GM12878 (cell line): ENCODE measurements at regions of chr4 and their contacts with region 1.

Region 1: GRCh38 chr4:10743357-10743756 is 58.8 kb upstream of the CLNK start:
- DNase-seq: peak; percentile 91
- ATAC-seq: peak; percentile 80
- H3K4me3 ChIP-seq: peak overlapping the region; percentile 27; the same call in 1 of the 2 replicates
- H3K27ac ChIP-seq: peak overlapping the region; percentile 78
- H3K4me1 ChIP-seq: peaks cover 45% of the 10 kb centered on the region
- H3K27me3 ChIP-seq: no peaks in the 10 kb centered on the region
- CTCF ChIP-seq: no peak
- EP300 ChIP-seq: peak; percentile 75 to 87; a peak in 3 of 4 replicates
- POLR2A ChIP-seq: no peak
- RAD21 ChIP-seq: peak; percentile 17; the same call in 1 of the 2 replicates

Region 2: DNA sequence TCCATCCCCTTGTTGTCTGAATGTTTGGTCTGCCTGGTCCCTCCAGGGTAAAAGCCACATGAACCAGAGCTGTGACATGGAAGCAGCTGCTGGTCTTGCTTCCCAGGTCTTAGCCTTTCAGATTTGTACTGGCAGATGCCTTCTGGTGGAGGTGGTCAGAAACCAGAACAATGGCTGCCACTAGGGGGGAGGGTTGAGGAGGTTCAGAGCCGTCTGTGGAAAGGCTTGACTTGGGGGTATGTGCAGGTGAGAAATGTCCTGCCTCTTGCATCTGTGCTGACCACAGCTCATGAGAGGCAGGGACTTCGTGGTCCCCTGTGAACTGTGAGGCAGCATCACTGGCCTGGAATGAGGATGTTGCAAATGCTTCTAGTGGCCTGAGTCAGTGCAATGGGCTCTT is 482.6 kb before region 1 on chr4:
- CTCF ChIA-PET with region 1: no interaction called
- POLR2A ChIA-PET with region 1: no interaction called
- RAD21 ChIA-PET with region 1: no interaction called
- SMC1A ChIA-PET with region 1: no interaction called
- in situ Hi-C with region 1: no loop called
- intact Hi-C with region 1: no loop called
- DNase-seq: no peak
- ATAC-seq: no peak
- H3K4me3 ChIP-seq: no peak overlapping the region
- H3K27ac ChIP-seq: no peak overlapping the region
- H3K4me1 ChIP-seq: no peaks in the 10 kb centered on the region
- H3K27me3 ChIP-seq: no peaks in the 10 kb centered on the region; a peak in 2 of 4 replicates
- CTCF ChIP-seq: no peak
- EP300 ChIP-seq: no peak
- POLR2A ChIP-seq: no peak
- RAD21 ChIP-seq: no peak

Region 3: DNA sequence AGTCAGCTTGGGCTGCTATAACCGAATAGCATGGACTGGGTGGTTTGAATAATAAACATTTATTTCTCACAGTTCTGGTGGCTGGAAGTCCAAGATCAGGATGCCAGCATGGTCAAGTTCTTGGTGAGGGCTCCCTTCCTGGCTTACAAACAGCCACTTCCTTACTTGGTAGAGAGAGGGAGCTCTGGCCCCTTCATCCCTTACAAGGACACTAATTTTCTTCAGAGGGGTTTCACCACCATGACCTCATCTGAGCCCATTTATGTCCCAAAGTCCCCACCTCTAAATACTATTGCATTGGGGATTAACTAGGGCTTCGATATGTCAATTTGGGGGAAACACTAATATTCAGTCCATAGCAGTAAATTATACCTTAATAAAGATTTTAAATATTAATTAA is 120.6 kb before region 1 on chr4:
- CTCF ChIA-PET with region 1: interaction called, 5 read pairs
- POLR2A ChIA-PET with region 1: no interaction called
- RAD21 ChIA-PET with region 1: no interaction called
- SMC1A ChIA-PET with region 1: interaction called, 4 read pairs
- in situ Hi-C with region 1: no loop called
- intact Hi-C with region 1: loop called (anchors 1 kb)
- DNase-seq: peak; percentile 26
- ATAC-seq: peak; percentile 93
- H3K4me3 ChIP-seq: no peak overlapping the region
- H3K27ac ChIP-seq: no peak overlapping the region
- H3K4me1 ChIP-seq: no peaks in the 10 kb centered on the region
- H3K27me3 ChIP-seq: no peaks in the 10 kb centered on the region
- CTCF ChIP-seq: peak; percentile 49 to 70 (median 69)
- EP300 ChIP-seq: no peak
- POLR2A ChIP-seq: no peak
- RAD21 ChIP-seq: peak; percentile 90

Region 4: DNA sequence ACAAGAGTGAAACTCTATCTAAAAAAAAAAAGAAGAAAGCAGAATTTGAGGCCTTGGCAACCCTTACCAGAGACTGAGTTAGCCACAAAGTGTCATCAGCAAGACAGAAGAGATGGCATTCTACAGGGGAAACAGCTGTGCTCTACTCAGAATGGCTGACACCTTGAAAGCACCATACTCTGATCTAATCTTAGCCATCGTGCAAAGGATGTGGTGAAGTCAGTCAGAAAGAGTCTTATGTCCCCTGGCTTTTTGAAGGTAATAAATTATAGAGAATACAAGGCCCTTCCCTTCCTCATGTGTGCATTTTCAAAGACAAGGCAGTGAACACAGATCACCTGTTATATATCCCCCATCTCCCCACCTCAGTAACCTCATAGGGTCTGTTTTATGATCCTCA is 72.0 kb before region 1 on chr4:
- CTCF ChIA-PET with region 1: interaction called, 4 read pairs
- POLR2A ChIA-PET with region 1: interaction called, 4 read pairs
- RAD21 ChIA-PET with region 1: interaction called, 6 read pairs
- SMC1A ChIA-PET with region 1: interaction called, 16 read pairs
- in situ Hi-C with region 1: no loop called
- intact Hi-C with region 1: no loop called
- DNase-seq: peak; percentile 92
- ATAC-seq: peak; percentile 84
- H3K4me3 ChIP-seq: no peak overlapping the region
- H3K27ac ChIP-seq: peak overlapping the region; percentile 57
- H3K4me1 ChIP-seq: peaks cover 29% of the 10 kb centered on the region
- H3K27me3 ChIP-seq: no peaks in the 10 kb centered on the region
- CTCF ChIP-seq: no peak
- EP300 ChIP-seq: no peak; a peak in 1 of 4 replicates
- POLR2A ChIP-seq: no peak
- RAD21 ChIP-seq: peak; percentile 24; the same call in 1 of the 2 replicates

Region 5: GRCh38 chr4:10684631-10685030 is 58.7 kb before region 1 on chr4 and contains the start of gene CLNK:
- CTCF ChIA-PET with region 1: no interaction called
- POLR2A ChIA-PET with region 1: interaction called, 6 read pairs
- RAD21 ChIA-PET with region 1: interaction called, 8 read pairs
- SMC1A ChIA-PET with region 1: interaction called, 15 read pairs
- in situ Hi-C with region 1: no loop called
- intact Hi-C with region 1: no loop called
- DNase-seq: peak; percentile 77
- ATAC-seq: peak; percentile 77
- H3K4me3 ChIP-seq: peak within 1 kb of the TSS; percentile 52
- H3K27ac ChIP-seq: peak within 1 kb of the TSS; percentile 80
- H3K4me1 ChIP-seq: peaks cover 27% of the 10 kb centered on the region
- H3K27me3 ChIP-seq: no peaks in the 10 kb centered on the region
- CTCF ChIP-seq: no peak
- EP300 ChIP-seq: no peak
- POLR2A ChIP-seq: peak; percentile 52; the same call in 1 of the 2 replicates
- RAD21 ChIP-seq: peak; percentile 23; the same call in 1 of the 2 replicates
- polyA plus RNA-seq, gene CLNK: 2.1 to 2.6 TPM

Region 6: GRCh38 chr4:11073621-11074051 is 330.3 kb after region 1 on chr4:
- CTCF ChIA-PET with region 1: no interaction called
- POLR2A ChIA-PET with region 1: no interaction called
- RAD21 ChIA-PET with region 1: no interaction called
- SMC1A ChIA-PET with region 1: no interaction called
- in situ Hi-C with region 1: no loop called
- intact Hi-C with region 1: loop called (anchors 5 kb)
- DNase-seq: no peak
- ATAC-seq: no peak
- H3K4me3 ChIP-seq: no peak overlapping the region
- H3K27ac ChIP-seq: no peak overlapping the region
- H3K4me1 ChIP-seq: no peaks in the 10 kb centered on the region
- H3K27me3 ChIP-seq: no peaks in the 10 kb centered on the region
- CTCF ChIP-seq: no peak
- EP300 ChIP-seq: no peak
- POLR2A ChIP-seq: no peak
- RAD21 ChIP-seq: no peak